ENCODE measurements at regions of chr10 and their contacts with region 1.

Region 1: GRCh38 chr10:17533731-17534130 is 79.3 kb upstream of the ST8SIA6 start:
- DNase-seq: no peak
- ATAC-seq: no peak
- H3K4me3 ChIP-seq: no peak overlapping the region
- H3K27ac ChIP-seq: no peak overlapping the region
- H3K4me1 ChIP-seq: no peaks in the 10 kb centered on the region
- H3K27me3 ChIP-seq: no peaks in the 10 kb centered on the region
- CTCF ChIP-seq: no peak

Region 2: DNA sequence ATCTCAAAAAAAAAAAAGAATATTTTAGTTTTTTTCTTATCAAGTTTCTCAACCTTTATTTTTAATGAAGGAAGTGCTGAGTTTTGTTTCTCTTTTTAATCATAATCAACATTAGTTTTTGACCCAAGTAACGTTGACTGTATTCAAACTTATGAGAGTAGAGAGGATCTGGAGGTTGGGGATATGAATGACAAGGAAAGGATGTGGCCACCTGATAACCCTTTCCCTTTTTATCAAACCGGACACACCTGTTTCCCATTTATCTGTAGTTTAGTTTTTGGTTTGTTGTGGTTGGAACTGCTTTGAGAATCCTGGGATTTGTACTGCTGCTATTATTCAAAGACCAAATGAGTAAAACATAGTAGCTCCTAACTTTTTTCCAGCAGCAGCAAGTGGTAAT is 44.9 kb after region 1 on chr10:
- intact Hi-C with region 1: loop called in 1 of 10 experiments (anchors 5 kb)
- DNase-seq: peak in 1 of 2 donors; percentile 22
- ATAC-seq: peak in 7 of 8 donors; percentile 63 to 93 (median 74)
- H3K4me3 ChIP-seq: no peak overlapping the region
- H3K27ac ChIP-seq: peak overlapping the region in 5 of 10 donors; percentile 1 to 48 (median 38)
- H3K4me1 ChIP-seq: no peaks in the 10 kb centered on the region
- H3K27me3 ChIP-seq: no peaks in the 10 kb centered on the region
- CTCF ChIP-seq: no peak